ENCODE measurements at regions of chr12 and their contacts with region 1.

Region 1: DNA sequence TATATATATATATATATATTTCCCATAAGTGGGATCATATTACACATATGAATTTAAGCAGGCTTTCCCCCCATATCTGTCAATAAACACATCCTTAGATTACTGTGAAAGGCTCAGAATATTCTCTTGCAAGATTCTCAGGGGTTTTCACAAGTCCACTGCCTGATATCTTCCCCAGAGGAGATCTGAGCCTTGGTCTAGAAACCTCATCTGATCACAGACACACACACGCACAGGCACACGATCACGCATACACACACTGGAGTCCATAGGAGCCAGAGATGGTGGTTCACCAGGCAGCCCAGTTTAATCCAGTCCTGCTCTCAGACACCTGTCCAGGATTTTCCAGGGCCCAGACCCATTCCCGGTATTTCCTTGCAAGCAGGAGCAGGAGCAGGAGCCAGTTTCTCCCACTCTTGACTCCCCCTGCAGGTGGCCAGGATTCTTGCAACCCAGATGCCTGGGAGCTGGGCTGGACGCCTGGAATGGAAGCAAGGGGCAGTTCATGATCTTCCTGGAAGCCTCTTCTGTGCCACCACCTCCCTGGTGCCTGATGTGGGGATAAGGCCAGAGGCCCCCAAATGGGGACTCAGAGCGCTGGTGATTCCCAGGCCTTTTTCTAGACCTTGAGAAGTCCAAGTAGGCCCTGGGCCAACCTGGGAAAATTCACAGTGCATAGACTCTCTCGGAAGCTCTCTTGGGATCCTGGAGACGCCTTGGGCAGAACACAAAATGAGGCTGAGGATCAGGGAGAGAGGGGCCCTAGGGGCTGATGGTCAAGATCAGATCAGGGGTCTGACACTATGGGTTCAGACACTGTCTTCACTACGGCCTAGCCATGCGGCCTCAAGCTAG is 16.5 kb upstream of the KRT78 start:
- DNase-seq: peak; percentile 71 to 95
- H3K4me3 ChIP-seq: no peak overlapping the region
- CTCF ChIP-seq: peak in 1 of 3 donors; percentile 45
- POLR2A ChIP-seq: no peak

Region 2: GRCh38 chr12:52582971-52583456 is 282.3 kb before region 1 on chr12:
- intact Hi-C with region 1: loop called (anchors 5 kb)
- DNase-seq: peak; percentile 71 to 87
- H3K4me3 ChIP-seq: no peak overlapping the region
- CTCF ChIP-seq: peak in 1 of 3 donors; percentile 58
- POLR2A ChIP-seq: no peak

Region 3: GRCh38 chr12:52687497-52688385 is 177.6 kb before region 1 on chr12:
- intact Hi-C with region 1: loop called (anchors 10 kb)
- DNase-seq: no peak
- H3K4me3 ChIP-seq: no peak overlapping the region
- CTCF ChIP-seq: no peak
- POLR2A ChIP-seq: no peak

Region 4: DNA sequence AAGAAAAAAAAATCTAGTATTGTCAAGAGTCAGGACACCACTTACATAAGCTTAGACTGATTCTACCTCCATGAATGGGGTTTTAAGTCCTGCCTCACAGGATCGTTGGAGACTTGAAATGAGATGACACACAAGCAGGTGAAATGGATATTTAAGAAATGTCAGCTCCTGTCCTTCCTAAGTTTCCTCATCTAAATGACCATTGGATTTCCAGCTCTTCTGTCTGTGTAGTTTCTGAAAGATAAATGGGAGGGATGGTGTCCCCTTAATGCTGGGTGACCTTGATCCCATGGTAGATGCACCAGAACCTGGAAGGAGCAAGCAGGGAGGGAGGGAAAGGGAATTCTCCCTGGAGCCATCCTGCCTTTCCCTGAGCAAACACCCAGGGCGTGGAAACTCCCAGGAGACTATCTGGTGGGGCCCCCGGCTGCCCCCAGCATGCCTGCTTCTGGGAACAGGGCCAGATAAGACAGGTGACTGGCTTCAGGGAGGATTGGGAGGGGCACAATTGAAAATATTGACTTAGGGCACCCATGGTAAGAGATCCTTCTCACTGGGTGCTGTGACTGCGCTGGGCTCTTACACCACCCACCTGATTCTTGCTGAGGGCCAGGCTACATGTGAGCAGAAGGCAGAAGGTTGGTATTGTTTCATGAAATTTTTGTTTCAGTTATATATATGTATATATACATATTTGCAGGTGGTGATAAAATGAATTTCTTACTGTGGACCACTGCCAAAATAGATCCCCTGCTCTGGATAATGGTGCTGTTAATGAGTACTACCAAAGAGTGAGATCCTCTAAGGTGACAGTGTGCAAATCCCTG is 30.0 kb after region 1 on chr12:
- intact Hi-C with region 1: no loop called
- DNase-seq: no peak
- H3K4me3 ChIP-seq: no peak overlapping the region
- CTCF ChIP-seq: no peak
- POLR2A ChIP-seq: no peak

Region 5: DNA sequence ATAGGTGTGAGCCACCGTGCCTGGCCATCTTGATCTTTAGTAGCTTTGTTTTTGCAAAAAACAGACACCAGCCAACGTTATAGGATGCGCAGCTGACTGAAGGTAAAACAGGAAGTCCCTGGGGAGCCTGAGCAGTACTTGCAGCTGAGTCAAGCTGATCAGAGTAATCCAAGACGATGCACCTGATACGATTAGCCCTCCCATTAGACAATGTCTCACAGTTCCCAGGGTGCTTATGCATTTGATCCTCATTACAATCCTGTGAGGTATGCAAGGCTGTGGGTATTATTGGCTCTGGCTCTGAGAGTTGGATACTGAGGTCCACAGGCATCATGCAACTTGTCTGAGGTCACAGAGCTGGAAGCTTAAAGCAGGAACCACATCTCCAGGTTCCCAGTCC is 91.7 kb after region 1 on chr12:
- intact Hi-C with region 1: no loop called
- DNase-seq: no peak
- H3K4me3 ChIP-seq: no peak overlapping the region
- CTCF ChIP-seq: no peak
- POLR2A ChIP-seq: no peak

Measured in lower leg skin (tissue), 4 donors.